ENCODE measurements at regions of chr15 and their contacts with region 1.

Region 1: DNA sequence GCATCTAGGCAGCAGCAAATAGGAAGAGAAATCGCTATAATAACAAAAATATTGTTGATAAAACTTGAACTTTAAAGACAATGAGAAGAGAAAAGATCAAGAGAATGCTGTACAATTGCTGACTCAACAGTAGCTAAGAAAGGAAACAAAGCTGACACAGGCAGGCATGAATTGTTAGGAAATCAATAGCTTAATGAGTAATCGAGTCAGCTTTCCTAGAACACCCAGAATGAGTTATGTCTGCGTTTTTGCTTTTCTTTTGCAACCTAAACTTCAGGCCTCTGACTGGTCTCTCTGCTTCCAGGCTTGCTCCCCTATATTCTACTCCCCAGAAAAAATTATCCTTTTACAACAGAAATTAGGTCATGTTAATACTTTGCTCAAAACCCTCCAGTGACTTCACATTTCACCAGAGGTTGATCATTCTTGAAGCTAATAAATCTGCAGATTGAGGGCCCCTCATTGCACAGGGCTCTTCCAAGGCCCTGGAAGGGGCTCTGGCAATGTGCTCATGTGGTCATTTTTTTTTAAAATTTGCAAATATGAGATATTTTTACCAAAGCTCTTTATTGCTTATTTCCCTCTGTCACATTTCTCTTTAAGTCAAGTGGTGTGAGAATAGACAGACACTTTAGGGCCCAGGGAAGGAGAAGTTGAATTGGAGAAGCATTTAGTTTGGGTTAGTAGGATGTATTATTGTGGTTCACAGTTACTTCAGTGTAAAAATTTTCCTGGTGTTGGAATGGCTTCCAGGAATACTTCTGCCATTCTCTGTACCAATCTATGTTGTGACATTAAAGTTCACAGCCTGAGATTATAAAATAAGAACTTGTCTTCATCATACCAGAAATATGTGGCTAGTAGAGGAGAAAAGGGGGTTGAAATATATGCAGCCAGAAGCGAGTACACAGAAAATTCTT is 116.3 kb downstream of the TMCO5A start:
- DNase-seq: no peak

Region 2: GRCh38 chr15:38028869-38029268 is 21.9 kb before region 1 on chr15:
- intact Hi-C with region 1: loop called in 1 of 2 experiments (anchors 1 kb)
- DNase-seq: no peak